Endothelial cell of umbilical vein (primary cell): ENCODE measurements at regions of chr2 and their contacts with region 1.

Region 1: DNA sequence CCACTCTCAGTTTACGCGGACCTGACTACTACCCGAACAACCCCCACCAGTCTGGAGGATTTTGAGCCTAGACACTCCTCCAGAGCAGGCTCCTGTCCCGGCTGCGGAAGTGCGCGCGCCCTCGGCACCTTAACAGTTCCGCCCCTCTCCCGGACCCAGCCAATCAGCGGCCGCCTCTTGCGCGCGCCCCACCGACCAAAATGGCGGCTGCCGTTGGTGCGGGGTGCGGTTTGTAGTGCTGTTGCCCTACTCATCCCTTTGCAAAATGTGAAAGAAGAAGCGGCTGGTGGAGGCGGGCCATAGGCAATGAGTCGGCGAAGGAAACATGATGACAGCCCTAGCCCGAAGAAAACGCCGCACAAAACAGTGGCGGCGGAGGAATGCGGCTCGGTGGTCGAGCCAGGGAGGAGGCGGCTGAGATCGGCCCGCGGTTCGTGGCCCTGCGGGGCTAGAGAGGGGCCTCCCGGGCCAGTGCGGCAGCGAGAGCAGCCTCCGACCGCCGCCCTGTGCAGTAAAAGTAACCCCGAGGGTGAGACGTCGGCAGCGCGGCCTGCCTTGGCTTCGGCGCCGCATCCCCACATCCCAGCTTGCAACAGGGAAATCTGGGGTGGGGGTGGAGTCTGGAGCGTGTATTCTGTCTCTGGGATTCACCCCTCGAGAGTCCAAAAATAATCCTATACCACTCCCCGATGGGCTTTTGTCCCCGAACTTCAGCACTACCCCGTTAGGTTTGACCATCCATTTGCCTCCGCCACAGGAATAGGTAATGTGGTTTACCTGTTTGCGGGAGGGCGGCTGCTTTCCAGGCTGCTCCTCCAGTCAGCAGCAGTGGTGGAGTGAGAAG is at the start of gene ETAA1:
- DNase-seq: peak; percentile 88
- H3K4me3 ChIP-seq: peak within 1 kb of the TSS; percentile 89 to 93 (median 90)
- H3K27ac ChIP-seq: peak within 1 kb of the TSS; percentile 83
- H3K4me1 ChIP-seq: peaks cover 65% of the 10 kb centered on the region
- H3K27me3 ChIP-seq: no peaks in the 10 kb centered on the region
- CTCF ChIP-seq: no peak
- POLR2A ChIP-seq: peak; percentile 70
- total RNA-seq, gene ETAA1: 15.9 and 17.5 TPM in 2 replicates

Region 2: GRCh38 chr2:67159929-67160328 is 237.4 kb before region 1 on chr2:
- CTCF ChIA-PET with region 1: no interaction called
- POLR2A ChIA-PET with region 1: no interaction called
- dilution Hi-C with region 1: no loop called
- intact Hi-C with region 1: loop called (anchors 2 kb)
- DNase-seq: peak; percentile 93
- H3K4me3 ChIP-seq: no peak overlapping the region
- H3K27ac ChIP-seq: peak overlapping the region; percentile 47
- H3K4me1 ChIP-seq: peaks cover 10% of the 10 kb centered on the region
- H3K27me3 ChIP-seq: no peaks in the 10 kb centered on the region
- CTCF ChIP-seq: no peak
- POLR2A ChIP-seq: no peak

Region 3: GRCh38 chr2:67503066-67503795 is 105.9 kb after region 1 on chr2:
- CTCF ChIA-PET with region 1: no interaction called
- POLR2A ChIA-PET with region 1: no interaction called
- dilution Hi-C with region 1: no loop called
- intact Hi-C with region 1: loop called (anchors 5 kb)
- DNase-seq: peak; percentile 90
- H3K4me3 ChIP-seq: no peak overlapping the region
- H3K27ac ChIP-seq: peak overlapping the region; percentile 95
- H3K4me1 ChIP-seq: peaks cover 18% of the 10 kb centered on the region
- H3K27me3 ChIP-seq: no peaks in the 10 kb centered on the region
- CTCF ChIP-seq: no peak
- POLR2A ChIP-seq: no peak

Region 4: DNA sequence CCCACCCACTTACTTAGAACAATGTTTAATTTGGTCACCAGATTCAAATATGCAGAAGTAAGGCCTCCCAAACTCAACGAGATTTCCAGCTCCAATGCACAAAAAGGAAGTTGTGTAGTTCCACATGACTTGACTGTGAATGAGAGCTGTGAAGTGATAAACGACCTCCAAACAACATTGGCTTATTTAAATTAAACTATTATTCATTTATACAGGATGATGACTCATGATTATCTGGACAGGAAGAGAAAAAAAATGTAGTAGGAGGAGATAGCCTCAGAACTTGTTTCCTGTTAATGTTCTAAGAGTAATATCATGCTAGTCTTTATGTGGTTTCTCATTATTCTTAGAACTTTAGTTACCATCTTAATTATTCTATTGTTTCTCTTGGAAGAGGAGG is 428.1 kb after region 1 on chr2:
- CTCF ChIA-PET with region 1: no interaction called
- POLR2A ChIA-PET with region 1: no interaction called
- dilution Hi-C with region 1: no loop called
- intact Hi-C with region 1: loop called (anchors 2 kb)
- DNase-seq: peak; percentile 92
- H3K4me3 ChIP-seq: peak overlapping the region in 1 of 3 experiments; percentile 43
- H3K27ac ChIP-seq: peak overlapping the region; percentile 80
- H3K4me1 ChIP-seq: peaks cover 22% of the 10 kb centered on the region
- H3K27me3 ChIP-seq: no peaks in the 10 kb centered on the region
- CTCF ChIP-seq: no peak
- POLR2A ChIP-seq: no peak

Region 5: DNA sequence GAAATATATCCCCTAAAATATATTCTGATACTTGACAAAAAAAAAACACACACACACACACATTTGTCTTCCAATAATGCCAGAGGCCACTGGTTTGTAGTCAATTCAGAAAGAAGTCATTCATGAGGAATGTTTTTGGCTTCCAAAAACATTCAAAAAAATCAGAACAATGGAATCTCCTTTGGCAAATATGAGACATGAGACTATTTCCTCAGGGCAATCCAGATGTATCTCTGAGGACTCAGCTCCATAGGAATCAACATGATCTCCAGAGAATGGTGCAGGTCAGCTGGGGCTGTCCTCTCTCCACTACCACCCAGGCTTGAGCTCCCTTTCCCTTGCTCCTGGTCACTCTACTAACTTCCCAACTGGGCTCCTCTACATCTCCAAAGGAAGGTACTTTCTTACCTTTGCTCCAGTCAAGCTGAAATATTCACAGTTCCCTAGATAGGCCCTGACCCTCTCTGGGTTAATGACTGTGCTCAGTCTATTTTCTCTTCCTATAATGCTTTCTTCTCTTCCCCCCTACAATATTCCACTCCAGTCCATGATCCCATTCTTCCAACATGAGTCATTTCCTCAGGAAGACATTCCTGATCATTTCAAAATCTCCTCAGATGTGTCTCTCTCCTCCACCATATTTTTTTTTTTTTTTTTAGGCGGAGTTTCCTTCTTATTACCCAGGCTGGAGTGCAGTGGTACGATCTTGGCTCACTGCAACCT is 520.1 kb after region 1 on chr2:
- CTCF ChIA-PET with region 1: no interaction called
- POLR2A ChIA-PET with region 1: no interaction called
- dilution Hi-C with region 1: no loop called
- intact Hi-C with region 1: loop called (anchors 1 kb)
- DNase-seq: peak; percentile 90
- H3K4me3 ChIP-seq: no peak overlapping the region
- H3K27ac ChIP-seq: peak overlapping the region; percentile 96
- H3K4me1 ChIP-seq: peaks cover 28% of the 10 kb centered on the region
- H3K27me3 ChIP-seq: no peaks in the 10 kb centered on the region
- CTCF ChIP-seq: no peak
- POLR2A ChIP-seq: no peak

Region 6: DNA sequence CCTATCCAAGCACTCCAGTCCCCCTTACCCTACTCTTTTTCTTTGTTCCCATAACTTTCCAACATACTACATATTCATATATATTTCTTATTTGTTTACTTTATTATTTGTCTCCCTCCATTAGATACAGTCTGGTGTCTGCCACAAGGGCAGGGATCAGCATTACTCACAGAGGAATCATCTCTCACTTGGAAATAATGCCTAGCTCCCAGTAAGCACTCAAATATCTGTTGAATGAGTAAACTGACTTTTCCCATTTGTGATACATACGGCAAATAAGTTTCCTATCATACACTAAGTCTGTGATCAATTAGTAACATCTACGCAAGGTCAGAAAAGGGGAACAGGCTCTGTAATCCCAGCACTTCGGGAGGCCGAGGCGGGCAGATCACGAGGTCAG is 646.7 kb after region 1 on chr2:
- CTCF ChIA-PET with region 1: no interaction called
- POLR2A ChIA-PET with region 1: no interaction called
- dilution Hi-C with region 1: no loop called
- intact Hi-C with region 1: no loop called
- DNase-seq: peak; percentile 25
- H3K4me3 ChIP-seq: no peak overlapping the region
- H3K27ac ChIP-seq: peak overlapping the region; percentile 21
- H3K4me1 ChIP-seq: peaks cover 4% of the 10 kb centered on the region
- H3K27me3 ChIP-seq: no peaks in the 10 kb centered on the region
- CTCF ChIP-seq: no peak
- POLR2A ChIP-seq: no peak